ENCODE measurements at regions of chr6 and their contacts with region 1.

Region 1: GRCh38 chr6:64330694-64331307 is 695.2 kb downstream of the PHF3 start:
- DNase-seq: peak; percentile 74
- H3K4me3 Mint-ChIP-seq: no peak overlapping the region
- H3K27ac Mint-ChIP-seq: no peak overlapping the region
- H3K4me1 Mint-ChIP-seq: no peaks in the 10 kb centered on the region
- H3K27me3 Mint-ChIP-seq: no peaks in the 10 kb centered on the region
- CTCF ChIP-seq: peak; percentile 69

Region 2: DNA sequence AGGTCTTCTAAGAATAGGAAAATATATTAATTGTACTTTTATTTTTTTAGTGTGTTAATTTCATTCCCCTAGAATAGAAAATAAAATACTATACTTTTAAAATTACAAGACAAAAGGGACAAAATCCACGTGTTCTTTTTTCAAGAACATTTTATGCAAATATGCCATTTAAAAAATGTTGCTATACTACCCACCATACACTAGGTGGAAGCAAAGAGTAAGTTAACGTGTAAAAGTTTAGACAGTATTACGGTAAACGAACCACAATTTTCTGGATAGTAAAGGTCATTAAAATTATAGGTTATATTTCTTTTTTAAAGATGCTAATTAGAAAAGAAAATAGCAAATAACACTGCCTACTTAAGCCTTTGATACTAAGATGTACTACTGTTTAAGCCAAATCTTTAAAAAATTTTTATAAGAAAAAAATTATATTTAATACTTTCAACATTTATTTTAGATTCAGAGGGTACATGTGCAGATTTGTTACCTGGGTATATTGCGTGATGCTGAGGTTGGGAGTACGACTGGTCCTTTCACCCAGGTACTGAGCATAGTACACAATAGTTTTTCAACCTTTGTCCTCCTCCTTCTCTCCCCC is 407.6 kb before region 1 on chr6:
- CTCF ChIA-PET with region 1: interaction called, 39 read pairs
- POLR2A ChIA-PET with region 1: no interaction called
- intact Hi-C with region 1: loop called (anchors 1 kb)
- DNase-seq: peak; percentile 57
- H3K4me3 Mint-ChIP-seq: no peak overlapping the region
- H3K27ac Mint-ChIP-seq: no peak overlapping the region
- H3K4me1 Mint-ChIP-seq: no peaks in the 10 kb centered on the region
- H3K27me3 Mint-ChIP-seq: no peaks in the 10 kb centered on the region
- CTCF ChIP-seq: peak; percentile 36

Region 3: DNA sequence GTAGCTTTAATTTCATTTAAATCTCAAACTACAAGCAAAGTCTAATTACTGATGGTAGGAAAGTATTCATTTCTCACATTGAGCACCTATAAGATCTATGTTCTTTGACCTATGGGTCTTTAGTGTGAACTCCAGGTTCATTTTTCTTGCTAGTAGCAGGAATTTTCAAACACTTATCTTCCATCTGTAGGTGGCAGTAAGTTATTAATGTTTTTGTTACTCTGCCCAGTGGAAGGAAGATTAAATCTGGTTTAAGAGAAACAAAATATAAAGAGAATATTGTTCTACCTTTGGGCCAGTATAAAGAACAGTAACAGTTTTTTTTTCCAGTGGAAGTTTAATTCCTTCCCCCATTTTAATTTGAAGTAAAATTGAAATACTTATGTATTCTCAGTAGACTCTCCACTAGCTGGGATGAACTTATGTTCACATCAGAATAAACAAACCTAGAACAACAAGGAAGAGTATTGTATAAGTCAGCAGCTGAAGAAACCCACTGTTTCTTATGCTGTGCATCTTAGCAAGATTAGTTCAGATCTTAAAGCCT is 367.0 kb before region 1 on chr6:
- CTCF ChIA-PET with region 1: interaction called, 10 read pairs
- POLR2A ChIA-PET with region 1: no interaction called
- intact Hi-C with region 1: loop called (anchors 5 kb)
- DNase-seq: no peak
- H3K4me3 Mint-ChIP-seq: no peak overlapping the region
- H3K27ac Mint-ChIP-seq: no peak overlapping the region
- H3K4me1 Mint-ChIP-seq: no peaks in the 10 kb centered on the region
- H3K27me3 Mint-ChIP-seq: no peaks in the 10 kb centered on the region
- CTCF ChIP-seq: no peak

Region 4: DNA sequence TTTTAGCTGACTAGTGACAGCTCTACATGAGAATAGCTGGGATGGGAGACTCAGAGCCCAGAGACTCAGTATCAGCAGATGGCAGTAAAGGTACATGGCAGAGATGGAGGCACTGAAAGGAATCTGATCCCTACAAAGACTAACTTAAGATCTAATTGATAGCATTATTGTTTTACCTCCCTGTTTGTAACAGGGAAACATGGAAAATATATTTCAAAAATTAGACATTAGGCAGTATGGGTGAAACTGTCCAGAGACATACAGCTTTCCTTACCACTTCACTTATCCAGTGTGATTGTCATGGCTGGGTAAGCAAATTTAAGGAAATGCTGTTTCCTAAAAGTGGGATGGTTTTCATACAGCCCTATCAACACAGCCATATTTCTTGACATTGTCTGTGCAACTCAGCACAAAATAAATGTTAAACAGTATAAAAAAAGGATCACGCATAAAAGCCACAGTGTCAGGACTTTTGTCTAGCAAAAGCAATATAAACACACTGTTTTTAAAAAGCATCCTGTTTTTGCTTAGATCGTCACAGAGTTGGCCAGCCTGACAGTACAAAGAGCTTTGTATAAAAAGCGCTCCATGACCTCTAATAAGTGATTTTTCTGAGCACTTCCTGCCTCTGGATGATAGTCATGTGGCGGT is 318.3 kb before region 1 on chr6:
- CTCF ChIA-PET with region 1: interaction called, 70 read pairs
- POLR2A ChIA-PET with region 1: interaction called, 3 read pairs
- intact Hi-C with region 1: loop called (anchors 1 kb)
- DNase-seq: peak; percentile 64
- H3K4me3 Mint-ChIP-seq: no peak overlapping the region
- H3K27ac Mint-ChIP-seq: no peak overlapping the region
- H3K4me1 Mint-ChIP-seq: no peaks in the 10 kb centered on the region
- H3K27me3 Mint-ChIP-seq: no peaks in the 10 kb centered on the region
- CTCF ChIP-seq: peak; percentile 92

Region 5: GRCh38 chr6:64310214-64310613 is 20.6 kb before region 1 on chr6:
- CTCF ChIA-PET with region 1: interaction called, 14 read pairs
- POLR2A ChIA-PET with region 1: no interaction called
- intact Hi-C with region 1: no loop called
- DNase-seq: no peak
- H3K4me3 Mint-ChIP-seq: no peak overlapping the region
- H3K27ac Mint-ChIP-seq: no peak overlapping the region
- H3K4me1 Mint-ChIP-seq: no peaks in the 10 kb centered on the region
- H3K27me3 Mint-ChIP-seq: no peaks in the 10 kb centered on the region
- CTCF ChIP-seq: no peak

Region 6: DNA sequence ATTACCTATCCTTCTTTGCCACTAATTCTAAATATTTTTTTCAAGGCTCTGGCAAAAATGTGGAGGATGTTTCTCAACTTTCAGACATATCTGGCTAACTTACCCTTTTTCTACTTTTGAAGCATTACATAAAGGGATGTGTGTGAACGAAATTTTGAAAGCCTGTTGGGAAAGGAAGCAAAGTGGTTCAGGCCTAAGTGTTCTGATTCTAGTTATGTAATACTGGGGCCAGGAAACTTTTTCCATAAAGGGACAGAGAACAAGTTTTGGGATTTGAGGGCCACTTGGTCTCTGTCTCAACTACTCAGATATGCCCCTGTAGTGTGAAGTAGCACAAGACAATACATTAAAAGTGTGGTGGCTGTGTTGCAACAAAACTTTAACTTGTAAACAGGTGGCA is 26.6 kb after region 1 on chr6:
- CTCF ChIA-PET with region 1: interaction called, 12 read pairs
- POLR2A ChIA-PET with region 1: no interaction called
- intact Hi-C with region 1: no loop called
- DNase-seq: no peak
- H3K4me3 Mint-ChIP-seq: no peak overlapping the region
- H3K27ac Mint-ChIP-seq: no peak overlapping the region
- H3K4me1 Mint-ChIP-seq: no peaks in the 10 kb centered on the region
- H3K27me3 Mint-ChIP-seq: no peaks in the 10 kb centered on the region
- CTCF ChIP-seq: no peak